Activated CD4-positive, alpha-beta memory T cell treated with anti-CD3 and anti-CD28 coated beads for 36 hours (primary cell): ENCODE measurements at regions of chr1 and their contacts with region 1.

Region 1: DNA sequence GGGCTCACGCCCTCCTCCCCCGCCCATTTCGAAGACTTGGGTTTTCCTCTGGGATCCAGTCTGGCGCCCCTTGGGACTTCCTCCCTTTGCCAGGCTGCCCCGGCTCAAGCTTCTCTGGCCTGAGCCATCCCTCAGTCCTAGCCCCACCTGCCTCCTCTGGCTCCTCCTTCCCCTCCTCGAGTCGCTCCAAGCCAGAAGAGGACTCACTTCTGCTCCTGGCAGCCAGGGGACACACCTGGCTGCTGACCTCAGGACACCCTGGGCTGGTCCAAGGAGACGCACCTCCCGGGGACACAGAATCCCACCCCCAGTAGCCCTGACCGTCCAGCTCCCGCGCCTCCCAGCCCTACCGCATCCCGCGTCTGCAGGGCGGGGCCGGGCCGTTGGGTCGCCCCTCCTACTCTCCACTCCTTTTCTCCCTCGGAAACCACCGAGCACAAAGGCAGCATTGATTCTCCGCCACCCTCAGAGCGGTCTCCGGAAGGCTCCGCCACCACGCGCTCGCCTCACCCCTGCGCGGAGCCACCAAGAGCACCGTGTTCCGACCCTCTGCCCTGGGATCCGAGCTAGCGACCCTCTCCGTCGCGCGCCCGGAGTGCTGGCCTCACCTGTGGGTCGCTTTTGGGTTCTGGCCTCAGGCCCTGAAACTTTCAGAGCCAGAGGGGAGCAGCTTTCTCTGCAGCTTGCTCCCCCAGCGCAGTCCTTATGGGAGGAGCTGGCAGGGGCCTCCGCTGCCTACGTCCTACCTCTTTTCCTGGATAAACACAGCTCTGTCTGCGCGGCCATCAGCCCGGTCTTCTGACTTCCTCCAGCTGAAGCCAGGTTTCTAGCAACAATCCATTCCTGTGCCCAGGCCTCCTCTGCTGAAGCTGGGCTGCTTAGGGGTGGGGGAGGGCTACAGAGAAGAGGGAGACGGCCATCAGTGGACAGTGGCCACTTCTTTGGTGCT is at the start of gene C2CD4D:
- DNase-seq: peak; percentile 86
- H3K4me3 Mint-ChIP-seq: peak within 1 kb of the TSS; percentile 89
- H3K27ac Mint-ChIP-seq: peak within 1 kb of the TSS; percentile 91
- H3K4me1 Mint-ChIP-seq: peaks cover 43% of the 10 kb centered on the region
- H3K27me3 Mint-ChIP-seq: no peaks in the 10 kb centered on the region
- total RNA-seq, gene C2CD4D: 3.3 to 3.9 TPM

Region 2: GRCh38 chr1:151443846-151444782 is 395.6 kb before region 1 on chr1:
- CTCF ChIA-PET with region 1: interaction called, 12 read pairs
- POLR2A ChIA-PET with region 1: interaction called, 3 read pairs
- intact Hi-C with region 1: no loop called
- DNase-seq: peak; percentile 75
- H3K4me3 Mint-ChIP-seq: no peak overlapping the region
- H3K27ac Mint-ChIP-seq: no peak overlapping the region
- H3K4me1 Mint-ChIP-seq: peaks cover 53% of the 10 kb centered on the region
- H3K27me3 Mint-ChIP-seq: no peaks in the 10 kb centered on the region

Region 3: DNA sequence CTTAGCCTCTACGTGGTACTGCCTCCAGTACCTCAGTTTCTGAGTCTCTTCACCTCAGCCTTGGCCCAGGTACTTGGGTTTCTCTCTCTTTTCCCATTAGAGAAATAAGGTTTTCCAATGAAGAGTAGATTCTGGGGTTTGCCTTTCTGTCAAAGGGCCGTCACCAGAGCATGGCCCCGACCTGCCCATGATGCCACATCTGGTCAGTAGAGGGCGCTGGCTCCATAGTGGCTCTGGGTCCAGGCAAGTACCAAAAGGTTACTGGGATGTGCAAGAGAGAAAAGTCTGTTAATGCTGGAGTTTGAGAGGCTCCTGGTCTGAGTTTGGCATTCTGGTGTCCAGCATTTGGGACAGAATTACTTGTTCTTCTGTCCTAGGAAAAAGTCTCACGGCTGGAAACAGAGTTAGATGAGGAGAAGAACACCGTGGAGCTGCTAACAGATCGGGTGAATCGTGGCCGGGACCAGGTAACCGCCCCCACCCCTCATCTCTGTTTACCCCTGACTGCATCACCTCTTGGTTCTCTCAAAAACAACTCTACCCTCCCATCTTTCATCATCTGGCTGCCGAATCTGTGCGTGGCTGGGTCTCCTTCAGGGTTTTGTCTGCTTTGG is 305.0 kb before region 1 on chr1:
- CTCF ChIA-PET with region 1: interaction called, 9 read pairs
- POLR2A ChIA-PET with region 1: no interaction called
- intact Hi-C with region 1: loop called (anchors 2 kb)
- DNase-seq: peak; percentile 88
- H3K4me3 Mint-ChIP-seq: no peak overlapping the region
- H3K27ac Mint-ChIP-seq: no peak overlapping the region
- H3K4me1 Mint-ChIP-seq: peaks cover 2% of the 10 kb centered on the region
- H3K27me3 Mint-ChIP-seq: no peaks in the 10 kb centered on the region

Region 4: DNA sequence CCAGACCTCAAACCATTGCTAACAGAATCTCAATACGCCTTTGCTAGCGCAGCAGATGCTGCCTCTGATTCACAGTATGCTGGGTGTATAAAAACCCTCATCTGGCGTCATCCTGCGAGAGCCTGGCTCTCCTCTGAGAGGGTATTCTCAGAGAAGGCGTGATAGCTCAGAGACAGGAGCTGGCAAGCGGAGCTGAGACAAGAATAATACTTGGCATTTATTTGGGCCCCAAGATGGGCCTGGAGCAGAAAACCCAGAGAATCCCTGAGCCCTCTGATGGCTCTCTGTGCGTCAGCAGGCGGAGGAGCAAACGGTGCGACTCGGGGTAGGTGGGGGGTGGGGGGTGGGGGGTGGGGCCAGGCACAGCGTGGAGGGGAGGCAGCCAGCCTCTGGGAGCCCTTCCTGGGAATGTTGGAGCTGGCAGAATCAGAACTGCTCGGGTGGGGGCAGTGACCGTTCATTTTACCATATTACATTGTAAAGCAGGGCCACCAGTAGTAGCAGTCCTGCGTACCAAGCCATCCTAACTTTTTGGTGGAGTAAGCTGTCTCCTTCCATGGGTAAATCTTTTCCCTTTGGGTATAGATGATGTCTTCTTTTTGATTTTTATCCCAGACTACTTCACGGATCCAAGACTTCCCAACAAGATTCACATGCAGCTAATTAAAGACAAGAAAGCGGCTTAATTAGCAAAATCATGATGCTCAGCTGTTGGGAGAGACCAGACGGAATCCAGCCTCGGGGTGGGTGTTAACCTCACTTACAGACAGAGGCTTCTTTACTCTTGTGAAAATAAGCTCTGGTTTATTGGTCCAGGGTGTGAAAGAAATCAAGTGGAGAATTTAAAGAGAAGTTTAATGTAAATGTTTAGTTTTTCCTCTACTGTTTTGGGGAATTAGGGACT is 111.3 kb before region 1 on chr1:
- CTCF ChIA-PET with region 1: interaction called, 29 read pairs
- POLR2A ChIA-PET with region 1: no interaction called
- intact Hi-C with region 1: no loop called
- DNase-seq: no peak
- H3K4me3 Mint-ChIP-seq: no peak overlapping the region
- H3K27ac Mint-ChIP-seq: no peak overlapping the region
- H3K4me1 Mint-ChIP-seq: no peaks in the 10 kb centered on the region
- H3K27me3 Mint-ChIP-seq: peaks cover 41% of the 10 kb centered on the region

Region 5: DNA sequence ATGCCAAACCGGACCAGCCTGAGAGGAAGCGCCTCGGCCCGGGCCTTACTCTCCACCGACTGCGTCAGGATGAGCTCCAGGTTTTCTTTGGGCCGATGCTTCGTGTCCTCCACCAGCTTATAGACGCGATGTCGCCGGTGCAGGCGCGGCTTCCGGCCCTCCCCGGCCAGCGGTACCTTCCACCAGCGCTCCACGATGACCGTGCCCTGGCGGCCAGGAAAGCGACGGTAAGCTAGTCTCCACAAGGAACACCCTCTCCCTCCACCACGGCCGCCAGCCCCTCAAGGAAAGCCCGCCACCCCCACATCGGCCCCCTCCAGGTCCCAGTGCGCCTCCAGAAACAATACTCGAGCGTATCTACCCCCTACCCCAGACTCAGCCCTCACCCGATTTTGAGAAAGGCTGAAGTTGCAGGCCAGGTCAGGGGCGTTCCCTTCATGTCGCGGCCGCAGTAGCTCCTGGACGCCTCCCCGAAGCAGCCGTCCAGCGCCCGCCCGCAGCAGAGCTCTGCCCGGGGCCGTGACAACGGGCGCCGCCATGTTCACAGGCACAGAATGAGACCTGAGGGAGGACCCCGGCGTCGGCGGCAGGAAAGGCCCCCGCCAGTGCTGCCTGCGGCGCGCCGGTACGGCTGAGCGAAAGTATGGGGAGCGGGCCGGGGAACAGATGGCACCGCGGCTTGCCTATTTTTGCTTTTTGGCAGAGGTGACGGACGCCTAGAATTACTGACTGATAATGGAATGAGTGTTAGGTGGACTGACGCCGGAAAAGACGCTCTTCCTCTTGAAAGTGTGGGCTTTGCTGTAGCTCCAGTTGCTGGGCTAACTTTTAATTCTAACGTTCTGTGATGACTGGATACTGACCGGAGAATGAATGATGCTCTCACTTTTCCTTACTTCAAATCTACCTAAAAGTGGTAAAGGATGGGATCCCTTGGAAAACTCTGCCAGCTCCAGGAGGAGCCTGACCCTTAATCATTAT is 76.5 kb before region 1 on chr1 and contains the start of gene MRPL9:
- CTCF ChIA-PET with region 1: interaction called, 21 read pairs
- POLR2A ChIA-PET with region 1: interaction called, 6 read pairs
- intact Hi-C with region 1: no loop called
- DNase-seq: peak; percentile 93
- H3K4me3 Mint-ChIP-seq: peak within 1 kb of the TSS; percentile 78
- H3K27ac Mint-ChIP-seq: peak within 1 kb of the TSS; percentile 86
- H3K4me1 Mint-ChIP-seq: peaks cover 16% of the 10 kb centered on the region
- H3K27me3 Mint-ChIP-seq: no peaks in the 10 kb centered on the region
- total RNA-seq, gene MRPL9: 135 to 154 TPM

Region 6: DNA sequence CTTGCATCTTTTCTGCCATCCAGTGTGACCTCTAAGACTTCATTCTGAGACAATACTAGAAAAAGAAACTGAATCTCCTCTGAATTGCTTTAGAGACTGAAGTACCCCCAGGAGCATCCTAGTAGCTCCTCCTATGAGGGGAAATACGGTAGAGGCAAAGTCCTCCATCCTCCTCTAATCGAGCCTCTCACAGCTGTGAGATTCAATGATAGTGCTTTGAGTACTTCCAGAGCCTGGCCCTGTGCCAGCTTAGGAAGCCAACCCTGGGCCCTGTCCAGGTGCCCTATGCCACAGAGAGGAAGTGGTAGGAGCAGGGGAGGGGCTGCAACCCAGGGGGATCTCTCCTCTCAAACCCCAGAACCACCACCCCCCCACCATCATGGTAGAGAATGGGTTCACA is 18.8 kb before region 1 on chr1:
- CTCF ChIA-PET with region 1: interaction called, 37 read pairs
- POLR2A ChIA-PET with region 1: interaction called, 8 read pairs
- intact Hi-C with region 1: no loop called
- DNase-seq: peak; percentile 55
- H3K4me3 Mint-ChIP-seq: peak overlapping the region; percentile 36
- H3K27ac Mint-ChIP-seq: peak overlapping the region; percentile 85
- H3K4me1 Mint-ChIP-seq: peaks cover 67% of the 10 kb centered on the region
- H3K27me3 Mint-ChIP-seq: no peaks in the 10 kb centered on the region

Region 7: DNA sequence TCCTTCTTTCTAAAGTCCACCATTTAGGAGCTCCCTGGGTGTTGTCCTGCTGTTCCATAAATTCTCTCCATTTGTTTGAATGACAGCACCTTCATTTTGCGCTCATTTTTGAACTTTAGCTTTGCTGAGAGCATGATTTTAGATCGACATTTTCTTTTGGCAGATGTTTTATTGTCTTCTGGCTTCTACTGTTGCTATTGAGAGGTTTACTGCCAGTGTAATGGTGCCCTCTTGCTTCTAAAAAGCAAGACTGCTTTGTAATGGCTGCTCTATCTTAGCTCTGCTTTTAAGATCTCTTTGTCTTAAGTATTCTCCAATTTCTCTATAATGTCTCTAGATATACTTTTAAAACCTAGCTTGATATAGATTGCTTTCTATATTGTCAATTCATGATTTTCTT is 41.7 kb after region 1 on chr1:
- CTCF ChIA-PET with region 1: no interaction called
- POLR2A ChIA-PET with region 1: no interaction called
- intact Hi-C with region 1: loop called (anchors 5 kb)
- DNase-seq: no peak
- H3K4me3 Mint-ChIP-seq: no peak overlapping the region
- H3K27ac Mint-ChIP-seq: no peak overlapping the region
- H3K4me1 Mint-ChIP-seq: no peaks in the 10 kb centered on the region
- H3K27me3 Mint-ChIP-seq: no peaks in the 10 kb centered on the region